T-cell (primary cell): ENCODE measurements at regions of chr13 and their contacts with region 1.

Region 1: DNA sequence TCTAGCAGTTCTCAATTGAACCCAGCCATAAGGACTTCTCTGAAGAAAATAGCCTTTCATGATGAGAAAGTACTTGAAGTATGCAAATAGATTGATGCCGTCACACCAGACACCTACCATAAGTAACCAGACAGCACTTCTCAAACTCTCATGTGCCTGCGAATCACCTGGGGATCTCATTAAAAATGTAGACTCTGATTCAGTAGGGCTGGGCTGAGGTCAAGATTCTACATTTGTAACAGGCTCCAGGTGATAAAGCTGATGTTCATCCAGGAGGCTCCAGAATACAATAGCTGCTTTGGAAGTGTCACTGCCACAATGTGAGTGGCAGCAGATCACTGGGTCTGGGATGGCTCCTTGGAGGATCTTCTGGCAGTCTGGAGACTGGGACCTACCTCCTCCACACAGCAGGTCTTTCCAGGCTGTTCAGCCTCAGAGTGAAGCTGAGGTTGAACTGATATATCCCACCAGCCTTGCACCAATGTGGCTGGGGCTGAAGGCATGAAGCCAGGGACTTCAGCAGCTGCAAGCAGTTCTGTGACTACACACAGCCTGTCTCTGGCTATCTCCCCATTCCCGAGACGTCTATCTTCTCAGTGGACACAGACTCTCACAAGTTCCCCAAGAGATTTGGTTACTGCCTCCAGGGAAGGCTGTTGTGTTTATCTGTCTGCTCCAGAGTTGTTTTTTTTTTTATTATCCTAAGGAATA is 9.1 kb downstream of the MBNL2 start:
- DNase-seq: no peak
- ATAC-seq: no peak
- H3K4me3 ChIP-seq: no peak overlapping the region
- H3K4me3 Mint-ChIP-seq: no peak overlapping the region
- H3K27ac ChIP-seq: no peak overlapping the region
- H3K27ac Mint-ChIP-seq: no peak overlapping the region
- H3K4me1 ChIP-seq: peaks cover 10 to 23% of the 10 kb centered on the region in 2 experiments
- H3K4me1 Mint-ChIP-seq: peaks cover 72 to 81% (median 78%) of the 10 kb centered on the region in 3 donors
- H3K27me3 ChIP-seq: no peaks in the 10 kb centered on the region
- H3K27me3 Mint-ChIP-seq: no peaks in the 10 kb centered on the region

Region 2: DNA sequence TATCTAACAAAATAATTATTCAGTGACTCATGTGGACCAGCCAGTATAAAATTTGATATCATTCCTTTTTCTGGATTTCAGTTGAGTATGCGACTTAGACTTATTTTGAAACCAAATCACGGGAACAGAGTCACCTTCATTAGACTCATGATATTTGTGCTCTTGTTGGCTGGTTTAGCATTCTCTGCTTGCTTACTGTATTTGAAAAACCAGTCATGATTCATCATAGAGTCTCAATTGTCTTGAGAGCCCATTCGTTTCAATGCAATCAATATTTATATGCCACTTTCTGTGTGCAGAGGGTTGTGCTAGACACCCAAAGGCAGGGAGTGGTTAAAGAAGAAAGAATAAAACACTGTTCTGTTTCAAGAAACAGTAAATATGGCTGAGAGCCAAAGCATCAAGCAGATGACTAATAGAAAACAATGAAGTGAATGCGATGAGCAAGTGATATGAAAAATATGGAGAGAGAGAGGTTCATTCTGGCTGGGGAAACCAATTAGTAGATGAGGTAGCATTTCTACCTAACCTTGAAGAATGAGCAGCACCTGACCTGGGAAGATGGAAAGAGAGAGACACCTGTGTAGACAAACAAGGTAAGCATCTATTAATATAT is 108.8 kb before region 1 on chr13:
- CTCF ChIA-PET with region 1: interaction called in 1 of 2 experiments, 10 read pairs
- POLR2A ChIA-PET with region 1: no interaction called
- DNase-seq: no peak
- ATAC-seq: no peak
- H3K4me3 ChIP-seq: no peak overlapping the region
- H3K4me3 Mint-ChIP-seq: no peak overlapping the region
- H3K27ac ChIP-seq: no peak overlapping the region
- H3K27ac Mint-ChIP-seq: no peak overlapping the region
- H3K4me1 ChIP-seq: no peaks in the 10 kb centered on the region
- H3K4me1 Mint-ChIP-seq: no peaks in the 10 kb centered on the region
- H3K27me3 ChIP-seq: peaks cover 0 to 14% of the 10 kb centered on the region in 2 experiments
- H3K27me3 Mint-ChIP-seq: peaks cover 31 to 38% of the 10 kb centered on the region in 2 donors